Right ventricle myocardium inferior (tissue), 1 donor: ENCODE measurements at regions of chr10 and their contacts with region 1.

Region 1: DNA sequence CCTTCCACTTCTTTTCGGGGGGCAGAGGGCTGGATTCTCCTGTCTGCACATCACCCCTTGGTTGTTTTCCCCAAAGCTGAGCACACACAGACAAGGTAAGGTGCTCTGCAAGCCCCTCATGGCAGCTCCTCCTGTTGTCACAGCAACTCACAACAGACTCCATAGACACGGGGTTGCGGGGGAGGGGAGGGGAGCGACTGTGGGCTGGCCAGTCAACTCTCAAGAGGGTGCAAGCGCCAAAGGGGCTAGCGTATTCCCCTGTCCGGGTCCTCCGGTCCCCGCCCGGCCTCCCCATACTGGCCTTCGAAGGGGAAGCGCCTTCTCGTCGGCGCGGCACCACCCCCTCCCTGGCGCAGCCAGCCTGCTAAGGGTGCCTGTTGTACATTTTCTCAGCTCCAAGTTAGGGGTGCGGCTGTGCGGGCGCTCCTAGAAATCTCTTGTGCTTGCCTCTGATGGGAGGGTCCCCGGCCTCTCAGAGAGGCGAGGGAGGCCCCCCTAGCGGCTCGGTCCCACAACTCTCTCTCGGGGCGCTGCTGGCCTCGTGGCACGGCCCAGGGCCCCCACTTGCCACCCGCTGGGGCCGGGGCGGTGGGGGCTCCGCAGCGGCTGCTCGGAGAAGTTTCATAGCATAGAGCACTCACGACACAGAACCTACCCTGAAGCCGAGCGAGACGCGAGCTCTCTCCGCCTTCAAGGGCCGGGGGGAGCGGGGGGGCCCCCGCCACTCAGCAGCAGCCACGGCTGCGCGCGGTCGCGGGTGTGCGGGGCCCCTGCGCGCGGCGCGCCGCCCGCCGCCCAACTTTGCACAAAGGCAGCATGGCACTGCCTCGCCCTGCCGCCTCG is 448 bp downstream of the RHOBTB1 start:
- DNase-seq: peak; percentile 88
- ATAC-seq: peak; percentile 61

Region 2: GRCh38 chr10:60883187-60883586 is 60.4 kb before region 1 on chr10:
- intact Hi-C with region 1: loop called (anchors 2 kb)
- DNase-seq: no peak
- ATAC-seq: peak; percentile 82

Region 3: DNA sequence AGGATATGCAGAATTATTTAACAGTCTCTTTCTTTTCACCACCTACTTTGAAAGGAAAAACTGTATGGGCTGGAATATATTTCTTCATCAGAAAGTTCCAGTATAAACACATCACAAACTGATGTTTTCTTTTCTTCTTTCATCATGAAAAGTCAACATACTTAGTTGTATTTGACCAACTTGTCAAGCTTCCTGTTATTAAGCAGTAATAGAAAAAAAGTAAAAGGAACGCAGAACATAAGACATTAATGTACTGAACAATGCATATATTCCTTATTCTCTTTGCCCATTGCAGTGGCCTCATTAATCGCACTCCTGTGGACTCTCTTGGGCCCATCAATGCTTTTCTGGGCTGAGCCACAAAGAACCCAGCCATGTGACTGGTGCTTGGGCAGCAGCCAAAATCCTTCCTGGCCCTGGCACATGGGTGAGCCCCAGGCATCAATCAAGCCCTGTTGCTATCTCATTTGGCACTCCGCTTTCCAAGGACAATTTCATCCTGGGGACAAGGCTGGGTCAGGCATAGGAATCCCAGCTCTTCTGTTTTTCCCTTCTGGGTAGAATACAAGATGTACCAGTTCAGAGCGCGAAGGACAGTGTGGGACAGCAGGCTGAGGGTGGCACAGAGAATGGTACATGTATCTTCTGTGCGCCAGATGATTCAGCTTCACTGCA is 41.8 kb before region 1 on chr10:
- intact Hi-C with region 1: loop called (anchors 2 kb)
- DNase-seq: peak; percentile 63
- ATAC-seq: peak; percentile 89

Region 4: DNA sequence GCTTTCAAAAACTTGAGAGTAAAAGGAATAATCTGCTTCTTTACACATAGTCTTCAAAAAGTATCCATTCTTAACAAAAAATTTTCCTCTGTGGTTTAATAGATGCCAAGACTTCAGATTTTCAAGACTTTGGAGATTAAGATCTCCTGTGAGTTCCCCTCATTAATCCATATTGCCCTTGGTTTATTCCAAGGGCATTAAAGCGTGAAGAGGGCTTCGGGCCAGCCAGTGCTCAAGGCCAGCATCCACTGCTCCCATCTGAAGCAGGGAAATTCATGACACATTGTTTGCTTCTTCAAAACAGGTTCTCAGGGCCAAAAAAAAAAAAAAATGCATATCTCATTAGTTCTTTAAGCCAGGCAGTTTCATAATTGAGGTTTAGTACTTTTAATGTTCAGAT is 137.8 kb after region 1 on chr10:
- intact Hi-C with region 1: no loop called
- DNase-seq: no peak
- ATAC-seq: no peak